ENCODE measurements at regions of chr12 and their contacts with region 1.

Region 1: DNA sequence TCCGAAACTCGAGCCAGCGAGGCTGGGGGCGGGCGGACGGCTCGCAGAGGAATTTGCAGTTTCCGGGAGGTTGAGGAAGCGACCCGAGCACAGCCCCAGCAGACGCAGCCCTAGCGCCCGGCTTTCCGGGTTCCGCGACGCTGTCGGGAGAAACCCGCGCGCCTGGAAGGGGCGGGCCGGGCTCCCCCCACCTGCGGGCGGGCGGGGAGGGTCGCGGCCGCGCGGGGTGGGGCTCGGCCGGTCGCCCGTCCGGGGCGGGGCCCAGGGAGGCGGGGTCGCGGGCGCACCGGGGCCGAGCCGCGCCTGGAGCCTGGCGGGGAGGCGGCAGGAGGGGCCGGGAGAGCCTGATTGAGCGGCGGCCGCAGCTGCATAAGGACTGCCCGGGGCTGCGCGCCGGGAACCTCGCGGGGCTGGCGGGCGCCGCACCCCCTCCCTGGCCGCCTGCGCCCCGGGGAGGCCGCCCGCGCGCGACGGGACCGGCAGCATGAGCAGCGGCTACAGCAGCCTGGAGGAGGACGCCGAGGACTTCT is at the start of gene RASSF3:
- DNase-seq: peak; percentile 94
- H3K4me3 ChIP-seq: peak within 1 kb of the TSS; percentile 74 to 91
- H3K27ac ChIP-seq: peak within 1 kb of the TSS; percentile 73 to 87
- H3K4me1 ChIP-seq: peaks cover 7 to 10% of the 10 kb centered on the region in 2 experiments; a peak in 3 of 4 replicates
- H3K27me3 ChIP-seq: no peaks in the 10 kb centered on the region
- CTCF ChIP-seq: no peak
- EP300 ChIP-seq: no peak
- RAD21 ChIP-seq: no peak; the same call in 1 of the 2 replicates
- polyA plus RNA-seq, gene RASSF3: 11.1 and 15.0 TPM in 2 replicates

Region 2: GRCh38 chr12:64544371-64545080 is 65.7 kb before region 1 on chr12:
- CTCF ChIA-PET with region 1: interaction called, 39 read pairs
- POLR2A ChIA-PET with region 1: no interaction called
- DNase-seq: peak; percentile 48
- H3K4me3 ChIP-seq: no peak overlapping the region
- H3K27ac ChIP-seq: peak overlapping the region in 1 of 2 experiments; percentile 69; a peak in 2 of 4 replicates
- H3K4me1 ChIP-seq: peaks cover 5 to 8% of the 10 kb centered on the region in 2 experiments; a peak in 3 of 4 replicates
- H3K27me3 ChIP-seq: no peaks in the 10 kb centered on the region
- CTCF ChIP-seq: no peak
- EP300 ChIP-seq: peak in 1 of 2 experiments; percentile 76; a peak in 2 of 4 replicates
- RAD21 ChIP-seq: 0 out of 2 replicates have a peak, but pooled peaks have one; percentile 2

Region 3: DNA sequence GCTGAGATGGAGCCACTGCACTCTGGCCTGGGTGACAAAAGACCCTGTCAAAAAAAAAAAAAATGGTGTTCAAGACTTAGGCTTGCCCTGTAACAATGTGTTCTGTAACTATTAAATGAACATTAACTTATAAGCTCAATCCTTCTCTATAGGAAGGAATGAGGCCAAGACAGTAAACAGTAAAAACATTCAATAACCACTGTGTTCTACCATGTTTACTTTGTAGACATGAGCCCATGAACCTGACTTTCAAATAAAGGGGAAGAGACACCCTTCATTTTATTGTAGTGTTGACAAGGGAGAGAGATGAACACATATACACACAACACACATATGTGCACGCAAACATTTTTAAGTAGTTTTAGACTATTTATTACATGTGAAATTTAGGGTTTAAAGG is 20.0 kb before region 1 on chr12:
- CTCF ChIA-PET with region 1: interaction called, 10 read pairs
- POLR2A ChIA-PET with region 1: no interaction called
- DNase-seq: no peak
- H3K4me3 ChIP-seq: no peak overlapping the region
- H3K27ac ChIP-seq: no peak overlapping the region
- H3K4me1 ChIP-seq: no peaks in the 10 kb centered on the region
- H3K27me3 ChIP-seq: no peaks in the 10 kb centered on the region
- CTCF ChIP-seq: no peak
- EP300 ChIP-seq: no peak
- RAD21 ChIP-seq: no peak

Region 4: DNA sequence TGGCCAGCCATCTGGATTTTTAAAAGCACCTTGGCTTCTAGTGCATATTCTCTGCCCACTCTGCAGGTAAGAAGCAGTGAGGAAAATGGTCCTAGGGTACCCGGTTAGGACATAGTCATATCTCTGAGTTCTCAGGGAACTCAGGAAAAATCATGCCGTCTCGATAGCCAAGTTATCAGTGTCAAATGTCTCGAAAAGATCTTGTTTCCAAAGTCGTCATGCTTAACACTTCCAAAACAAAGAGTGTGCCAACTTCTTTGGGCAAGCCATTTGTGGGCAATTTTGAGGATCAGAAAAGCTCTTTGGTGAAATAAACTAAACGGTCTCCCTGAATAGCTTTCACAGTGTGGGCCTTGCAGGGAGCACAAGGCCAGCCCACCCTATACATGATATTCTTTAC is 39.3 kb after region 1 on chr12:
- CTCF ChIA-PET with region 1: no interaction called
- POLR2A ChIA-PET with region 1: no interaction called
- DNase-seq: no peak
- H3K4me3 ChIP-seq: no peak overlapping the region
- H3K27ac ChIP-seq: peak overlapping the region in 1 of 2 experiments; percentile 60; a peak in 2 of 4 replicates
- H3K4me1 ChIP-seq: peaks cover 6 to 10% of the 10 kb centered on the region in 2 experiments; a peak in 2 of 4 replicates
- H3K27me3 ChIP-seq: no peaks in the 10 kb centered on the region
- CTCF ChIP-seq: no peak
- EP300 ChIP-seq: no peak
- RAD21 ChIP-seq: no peak

Region 5: GRCh38 chr12:64682572-64683277 is 72.5 kb after region 1 on chr12:
- CTCF ChIA-PET with region 1: interaction called, 25 read pairs
- POLR2A ChIA-PET with region 1: interaction called, 3 read pairs
- DNase-seq: peak; percentile 80
- H3K4me3 ChIP-seq: no peak overlapping the region
- H3K27ac ChIP-seq: peak overlapping the region in 1 of 2 experiments; percentile 91; a peak in 2 of 4 replicates
- H3K4me1 ChIP-seq: peaks cover 21 to 25% of the 10 kb centered on the region in 2 experiments
- H3K27me3 ChIP-seq: no peaks in the 10 kb centered on the region
- CTCF ChIP-seq: no peak
- EP300 ChIP-seq: peak in 1 of 2 experiments; percentile 77; a peak in 2 of 4 replicates
- RAD21 ChIP-seq: peak; percentile 18; the same call in 1 of the 2 replicates

Region 6: DNA sequence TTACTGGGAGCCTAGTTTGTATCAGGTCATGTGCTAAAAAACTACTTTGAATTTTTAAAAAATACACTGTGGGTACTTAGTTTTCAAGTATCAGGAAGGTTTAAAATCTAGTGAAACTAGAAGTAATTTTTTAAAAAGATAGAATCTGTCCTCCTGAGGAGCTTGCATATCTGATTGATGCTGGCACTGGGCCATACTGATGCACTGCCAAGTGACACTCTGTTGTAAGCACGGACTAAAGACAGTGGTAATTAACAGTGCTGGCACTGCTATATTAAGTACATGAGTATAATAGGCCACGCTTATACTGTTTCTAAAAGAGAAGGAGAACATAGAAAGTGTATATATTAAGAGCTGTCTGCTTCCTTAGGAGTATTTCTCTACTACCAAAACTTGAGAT is 204.2 kb after region 1 on chr12:
- CTCF ChIA-PET with region 1: no interaction called
- POLR2A ChIA-PET with region 1: no interaction called
- DNase-seq: no peak
- H3K4me3 ChIP-seq: no peak overlapping the region
- H3K27ac ChIP-seq: no peak overlapping the region
- H3K4me1 ChIP-seq: no peaks in the 10 kb centered on the region; a peak in 1 of 4 replicates
- H3K27me3 ChIP-seq: peaks cover 4% of the 10 kb centered on the region; the same call in 1 of the 2 replicates
- CTCF ChIP-seq: no peak
- EP300 ChIP-seq: no peak
- RAD21 ChIP-seq: no peak

Measured in SK-N-SH (cell line).